CD4-positive, alpha-beta T cell (primary cell): ENCODE measurements at regions of chr5 and their contacts with region 1.

Region 1: GRCh38 chr5:35617435-35618303 is at the start of gene SPEF2:
- DNase-seq: peak; percentile 55 to 90 (median 68)
- ATAC-seq: peak; percentile 84
- H3K4me3 ChIP-seq: peak within 1 kb of the TSS; percentile 79
- H3K4me3 Mint-ChIP-seq: peak within 1 kb of the TSS; percentile 93
- H3K27ac ChIP-seq: peak within 1 kb of the TSS; percentile 11 to 27
- H3K27ac Mint-ChIP-seq: peak within 1 kb of the TSS; percentile 88
- H3K4me1 ChIP-seq: peaks cover 15% of the 10 kb centered on the region
- H3K4me1 Mint-ChIP-seq: peaks cover 33% of the 10 kb centered on the region
- H3K27me3 ChIP-seq: no peaks in the 10 kb centered on the region
- H3K27me3 Mint-ChIP-seq: no peaks in the 10 kb centered on the region
- CTCF ChIP-seq: peak; percentile 76
- total RNA-seq, gene SPEF2: 3.2 TPM

Region 2: GRCh38 chr5:35237580-35238376 is 379.9 kb before region 1 on chr5:
- CTCF ChIA-PET with region 1: no interaction called
- POLR2A ChIA-PET with region 1: no interaction called
- intact Hi-C with region 1: no loop called
- DNase-seq: no peak
- ATAC-seq: no peak
- H3K4me3 ChIP-seq: no peak overlapping the region
- H3K4me3 Mint-ChIP-seq: no peak overlapping the region
- H3K27ac ChIP-seq: no peak overlapping the region
- H3K27ac Mint-ChIP-seq: no peak overlapping the region
- H3K4me1 ChIP-seq: no peaks in the 10 kb centered on the region
- H3K4me1 Mint-ChIP-seq: no peaks in the 10 kb centered on the region
- H3K27me3 ChIP-seq: no peaks in the 10 kb centered on the region
- H3K27me3 Mint-ChIP-seq: peaks cover 21% of the 10 kb centered on the region
- CTCF ChIP-seq: no peak

Region 3: DNA sequence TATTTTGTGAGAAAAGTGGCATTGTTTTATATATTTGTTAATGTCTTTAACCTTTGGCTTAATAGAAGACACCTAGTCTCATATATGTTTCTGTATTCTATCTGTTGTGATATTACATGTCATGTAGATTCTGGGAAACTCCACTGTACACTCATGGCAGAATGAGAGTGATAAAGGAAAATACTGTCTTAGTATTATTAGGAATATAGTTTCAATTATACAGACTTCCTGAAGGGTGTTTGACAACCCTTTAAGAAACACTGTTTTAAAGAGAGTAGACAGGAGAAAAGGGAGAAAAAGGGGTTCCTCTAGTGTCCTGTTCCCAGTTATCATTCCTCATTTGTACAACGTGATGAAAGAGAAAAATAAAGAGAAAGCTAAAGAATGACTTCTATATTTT is 42.1 kb before region 1 on chr5:
- CTCF ChIA-PET with region 1: no interaction called
- POLR2A ChIA-PET with region 1: no interaction called
- intact Hi-C with region 1: no loop called
- DNase-seq: no peak
- ATAC-seq: no peak
- H3K4me3 ChIP-seq: no peak overlapping the region
- H3K4me3 Mint-ChIP-seq: no peak overlapping the region
- H3K27ac ChIP-seq: no peak overlapping the region
- H3K27ac Mint-ChIP-seq: no peak overlapping the region
- H3K4me1 ChIP-seq: no peaks in the 10 kb centered on the region
- H3K4me1 Mint-ChIP-seq: no peaks in the 10 kb centered on the region
- H3K27me3 ChIP-seq: peaks cover 0 to 3% of the 10 kb centered on the region in 2 experiments
- H3K27me3 Mint-ChIP-seq: peaks cover 25% of the 10 kb centered on the region
- CTCF ChIP-seq: no peak

Region 4: GRCh38 chr5:35651002-35651756 is 33.5 kb after region 1 on chr5:
- CTCF ChIA-PET with region 1: interaction called, 15 read pairs
- POLR2A ChIA-PET with region 1: no interaction called
- intact Hi-C with region 1: loop called in 1 of 2 experiments (anchors 2 kb)
- DNase-seq: peak; percentile 37 to 84 (median 58)
- ATAC-seq: peak; percentile 99
- H3K4me3 ChIP-seq: no peak overlapping the region
- H3K4me3 Mint-ChIP-seq: no peak overlapping the region
- H3K27ac ChIP-seq: no peak overlapping the region
- H3K27ac Mint-ChIP-seq: peak overlapping the region; percentile 23
- H3K4me1 ChIP-seq: peaks cover 5% of the 10 kb centered on the region
- H3K4me1 Mint-ChIP-seq: peaks cover 16% of the 10 kb centered on the region
- H3K27me3 ChIP-seq: no peaks in the 10 kb centered on the region
- H3K27me3 Mint-ChIP-seq: no peaks in the 10 kb centered on the region
- CTCF ChIP-seq: peak; percentile 84